ENCODE measurements at regions of chr11 and their contacts with region 1.

Region 1: GRCh38 chr11:55503449-55503848 is 50.8 kb upstream of the OR4C15 start:
- DNase-seq: no peak
- ATAC-seq: no peak
- H3K4me3 ChIP-seq: no peak overlapping the region
- H3K27ac ChIP-seq: no peak overlapping the region
- H3K4me1 ChIP-seq: no peaks in the 10 kb centered on the region
- H3K27me3 ChIP-seq: no peaks in the 10 kb centered on the region
- CTCF ChIP-seq: no peak

Region 2: DNA sequence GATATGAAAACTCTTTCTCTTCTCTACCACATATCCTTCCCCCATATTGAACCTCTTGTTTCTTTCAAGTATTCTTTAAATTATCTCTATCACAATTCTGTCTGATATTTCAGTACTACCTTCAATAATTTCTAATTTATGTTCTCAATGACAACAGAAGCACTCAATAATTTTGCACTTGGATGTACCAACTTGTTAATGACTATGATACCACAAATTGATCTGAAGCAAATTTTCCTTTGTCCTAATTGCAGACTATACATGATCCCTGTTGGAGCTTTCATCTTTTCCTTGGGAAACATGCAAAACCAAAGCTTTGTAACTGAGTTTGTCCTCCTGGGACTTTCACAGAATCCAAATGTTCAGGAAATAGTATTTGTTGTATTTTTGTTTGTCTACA is 50.7 kb after region 1 on chr11 and contains the start of gene OR4C15:
- intact Hi-C with region 1: loop called in 1 of 3 experiments (anchors 5 kb)
- DNase-seq: no peak
- ATAC-seq: no peak
- H3K4me3 ChIP-seq: no peak within 1 kb of the TSS
- H3K27ac ChIP-seq: no peak within 1 kb of the TSS
- H3K4me1 ChIP-seq: no peaks in the 10 kb centered on the region
- H3K27me3 ChIP-seq: no peaks in the 10 kb centered on the region
- CTCF ChIP-seq: no peak
- total RNA-seq, gene OR4C15: not detected

Region 3: GRCh38 chr11:55572548-55572947 is 69.1 kb after region 1 on chr11:
- intact Hi-C with region 1: no loop called
- DNase-seq: no peak
- ATAC-seq: no peak
- H3K4me3 ChIP-seq: no peak overlapping the region
- H3K27ac ChIP-seq: no peak overlapping the region
- H3K4me1 ChIP-seq: no peaks in the 10 kb centered on the region
- H3K27me3 ChIP-seq: no peaks in the 10 kb centered on the region
- CTCF ChIP-seq: no peak

Measured in pancreas (tissue), 10 donors.